Motor neuron (in vitro differentiated cells): ENCODE measurements at regions of chr9 and their contacts with region 1.

Region 1: DNA sequence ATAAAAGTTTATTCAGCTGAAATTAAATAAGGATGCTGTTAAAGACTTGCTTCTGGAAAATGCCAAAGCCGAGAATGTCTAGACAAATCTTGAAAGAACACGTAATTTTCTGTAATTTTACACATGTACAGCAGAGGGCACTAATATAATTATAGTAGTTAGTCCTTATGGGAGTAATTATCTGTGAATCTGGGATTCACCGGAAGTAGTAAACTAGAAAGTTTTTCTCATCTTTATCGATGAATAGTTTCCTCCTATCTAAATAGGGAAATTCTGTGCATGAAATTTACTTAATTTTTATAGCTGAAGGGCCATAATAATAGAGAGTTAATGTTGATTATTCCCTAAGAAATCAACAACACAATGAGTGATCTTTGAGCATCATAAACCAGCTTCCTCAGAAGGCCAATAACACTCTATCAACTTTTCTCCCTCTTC is 18.4 kb upstream of the CNTLN start:
- ATAC-seq: peak in 3 of 8 experiments; percentile 56 to 63 (median 57)
- H3K4me3 ChIP-seq: no peak overlapping the region
- H3K27ac ChIP-seq: no peak overlapping the region
- H3K4me1 ChIP-seq: no peaks in the 10 kb centered on the region

Region 2: GRCh38 chr9:17425384-17425783 is 309.0 kb after region 1 on chr9:
- in situ Hi-C with region 1: loop called in 1 of 9 experiments (anchors 25 kb)
- ATAC-seq: no peak
- H3K4me3 ChIP-seq: no peak overlapping the region
- H3K27ac ChIP-seq: no peak overlapping the region
- H3K4me1 ChIP-seq: no peaks in the 10 kb centered on the region